ENCODE measurements at regions of chr9 and their contacts with region 1.

Region 1: DNA sequence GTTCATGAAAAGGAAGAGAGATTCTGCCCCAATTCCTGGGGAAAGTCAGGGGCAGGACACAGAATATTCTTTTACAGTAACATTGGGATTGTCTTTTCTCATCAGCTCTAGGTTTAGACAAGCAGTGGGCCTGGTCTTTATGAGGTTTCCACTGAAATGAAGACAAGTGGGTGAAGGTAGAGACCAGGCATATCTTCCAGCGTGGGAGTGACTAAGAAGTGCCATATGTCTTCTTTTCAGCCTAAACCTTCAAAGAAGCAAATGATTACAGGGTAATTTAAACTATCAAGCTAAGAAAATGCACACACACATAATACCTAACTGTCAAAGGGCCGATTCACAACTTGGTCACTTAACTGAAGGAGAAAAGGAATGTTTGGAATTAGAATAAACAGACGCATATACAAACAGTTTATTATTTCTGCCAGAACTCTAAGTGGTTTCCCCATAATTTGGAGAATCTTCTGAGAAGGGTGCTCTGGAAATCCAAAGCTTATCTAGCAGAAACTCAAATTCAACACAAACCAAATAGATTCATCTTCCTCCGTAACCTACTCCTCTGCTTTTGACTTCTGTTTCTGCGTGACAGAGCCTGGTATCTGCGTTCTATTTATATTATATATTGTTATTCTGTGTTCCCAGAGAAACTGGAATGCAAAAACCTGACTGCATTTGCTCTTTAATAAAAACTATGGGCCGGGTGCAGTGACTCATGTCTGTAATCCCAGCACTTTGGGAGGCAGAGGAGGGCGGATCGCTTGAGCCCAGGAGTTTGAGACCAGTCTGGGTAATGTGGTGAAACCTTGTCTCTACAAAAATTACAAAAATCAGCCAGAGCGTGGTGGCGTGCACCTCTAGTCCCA is 22.0 kb upstream of the TEK start:
- DNase-seq: no peak
- ATAC-seq: no peak
- H3K4me3 ChIP-seq: no peak overlapping the region
- H3K27ac ChIP-seq: no peak overlapping the region
- H3K4me1 ChIP-seq: no peaks in the 10 kb centered on the region
- H3K27me3 ChIP-seq: no peaks in the 10 kb centered on the region
- CTCF ChIP-seq: no peak
- POLR2A ChIP-seq: no peak

Region 2: GRCh38 chr9:26604076-26604662 is 482.9 kb before region 1 on chr9:
- in situ Hi-C with region 1: no loop called
- intact Hi-C with region 1: no loop called
- DNase-seq: no peak
- ATAC-seq: no peak
- H3K4me3 ChIP-seq: no peak overlapping the region
- H3K27ac ChIP-seq: no peak overlapping the region
- H3K4me1 ChIP-seq: no peaks in the 10 kb centered on the region
- H3K27me3 ChIP-seq: no peaks in the 10 kb centered on the region
- CTCF ChIP-seq: no peak
- POLR2A ChIP-seq: no peak

Region 3: DNA sequence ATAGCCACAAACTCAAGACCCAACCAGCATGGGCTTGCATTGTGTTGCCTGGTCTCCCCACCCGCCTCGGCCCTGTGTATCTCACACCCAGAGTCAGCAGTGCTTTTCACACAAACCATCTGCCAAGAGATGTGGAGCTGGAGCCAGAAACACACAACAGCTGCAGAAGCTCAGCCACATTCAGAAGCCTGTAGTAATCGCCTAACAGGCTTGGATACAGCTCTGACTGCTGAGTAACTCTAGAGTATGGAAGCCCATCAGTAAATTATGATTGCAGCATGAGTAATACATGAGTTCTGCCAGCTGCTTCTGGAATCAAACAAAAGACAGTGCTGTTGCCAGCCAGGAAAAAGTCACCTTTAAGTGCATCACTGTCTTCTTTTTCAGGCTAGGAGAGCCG is 38.0 kb after region 1 on chr9:
- in situ Hi-C with region 1: no loop called
- intact Hi-C with region 1: loop called (anchors 2 kb)
- DNase-seq: peak; percentile 71 to 72
- ATAC-seq: peak; percentile 93
- H3K4me3 ChIP-seq: no peak overlapping the region
- H3K27ac ChIP-seq: peak overlapping the region; percentile 59 to 89 (median 74)
- H3K4me1 ChIP-seq: peaks cover 16 to 27% of the 10 kb centered on the region in 2 donors
- H3K27me3 ChIP-seq: no peaks in the 10 kb centered on the region
- CTCF ChIP-seq: no peak
- POLR2A ChIP-seq: no peak